Right cardiac atrium (tissue), 5 donors: ENCODE measurements at regions of chr11 and their contacts with region 1.

Region 1: DNA sequence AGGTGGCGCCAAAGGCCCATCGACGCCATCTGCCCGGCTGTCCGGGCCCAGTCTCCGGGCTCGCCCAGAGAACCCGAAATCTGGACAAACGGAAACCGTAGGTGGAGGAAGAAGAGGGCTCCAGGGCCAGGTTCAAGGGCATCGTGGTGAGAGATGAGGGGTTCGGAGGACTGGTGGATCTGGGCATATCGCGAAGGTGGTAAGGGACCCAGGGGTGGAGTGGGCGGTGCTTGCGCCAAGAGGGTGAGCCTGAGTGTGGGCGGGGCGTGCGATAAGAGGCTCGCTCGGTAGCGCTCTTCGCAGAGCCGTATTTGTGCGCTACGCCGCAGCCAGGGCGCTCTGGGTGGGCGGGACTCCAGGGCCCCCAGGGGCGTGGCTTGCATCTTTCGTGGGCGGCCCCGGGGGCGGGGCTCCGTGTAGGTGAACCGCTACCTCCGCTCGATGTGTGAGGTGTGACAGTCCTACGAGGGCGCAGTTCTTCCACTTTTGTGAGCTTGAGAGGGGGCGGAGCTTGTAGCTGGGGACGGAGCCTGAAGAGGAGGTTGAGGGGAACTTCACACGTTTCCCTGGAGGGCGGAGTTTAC is 4.8 kb downstream of the CD248 start:
- DNase-seq: peak; percentile 93 to 97 (median 96)
- ATAC-seq: peak; percentile 83 to 88
- H3K4me3 ChIP-seq: peak overlapping the region; percentile 59
- H3K27ac ChIP-seq: peak overlapping the region; percentile 94
- H3K4me1 ChIP-seq: no peaks in the 10 kb centered on the region
- H3K27me3 ChIP-seq: no peaks in the 10 kb centered on the region

Region 2: GRCh38 chr11:66081505-66081904 is 230.6 kb before region 1 on chr11:
- intact Hi-C with region 1: no loop called
- DNase-seq: peak in 2 of 3 donors; percentile 68 to 75
- ATAC-seq: peak in 1 of 2 donors; percentile 36
- H3K4me3 ChIP-seq: no peak overlapping the region
- H3K27ac ChIP-seq: no peak overlapping the region
- H3K4me1 ChIP-seq: peaks cover 15% of the 10 kb centered on the region
- H3K27me3 ChIP-seq: no peaks in the 10 kb centered on the region

Region 3: GRCh38 chr11:66242095-66242765 is 69.8 kb before region 1 on chr11:
- intact Hi-C with region 1: no loop called
- DNase-seq: peak in 2 of 3 donors; percentile 24 to 59
- ATAC-seq: peak in 1 of 2 donors; percentile 19
- H3K4me3 ChIP-seq: no peak overlapping the region
- H3K27ac ChIP-seq: no peak overlapping the region
- H3K4me1 ChIP-seq: no peaks in the 10 kb centered on the region
- H3K27me3 ChIP-seq: no peaks in the 10 kb centered on the region

Region 4: DNA sequence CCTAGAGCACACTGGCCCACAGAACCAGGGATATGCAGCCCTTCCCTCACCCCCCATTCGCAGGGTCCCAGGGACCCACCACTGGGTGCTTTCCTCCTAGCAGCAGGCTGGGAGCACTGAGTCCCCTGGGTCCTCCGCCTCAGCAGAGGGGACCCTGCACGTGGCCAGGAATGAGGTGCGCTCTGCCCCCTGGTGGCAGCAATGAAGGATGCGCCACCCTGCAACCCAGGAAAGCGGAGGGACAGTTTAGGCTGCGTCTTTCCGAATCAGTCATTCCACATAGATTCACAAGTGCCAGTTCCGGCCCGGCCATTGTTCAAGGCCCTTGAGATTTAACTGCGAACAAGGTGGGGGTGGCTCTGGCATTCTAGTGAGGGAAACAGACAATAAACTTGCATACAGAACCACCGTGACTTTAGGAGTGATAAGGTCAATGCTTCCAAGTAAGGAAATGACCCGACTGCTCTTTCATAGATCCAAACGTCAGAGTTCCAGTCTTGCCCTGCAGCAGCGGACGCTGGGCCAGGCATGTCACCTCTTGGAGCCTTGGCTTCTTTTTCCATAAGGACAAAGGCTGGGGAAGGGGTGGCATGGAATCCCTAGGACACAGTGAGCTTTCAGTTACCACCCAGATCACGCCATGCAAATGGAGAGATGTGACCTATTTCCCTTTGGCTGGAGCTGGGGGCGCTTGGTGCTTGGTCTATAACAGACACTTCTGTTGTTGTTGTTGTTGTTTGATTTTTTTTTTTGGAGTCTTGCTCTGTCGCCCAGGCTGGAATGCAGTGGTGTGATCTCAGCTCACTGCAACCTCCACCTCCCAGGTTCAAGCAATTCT is 16.5 kb after region 1 on chr11:
- intact Hi-C with region 1: loop called in 2 of 4 experiments (anchors 2 kb)
- DNase-seq: peak; percentile 80 to 92 (median 91)
- ATAC-seq: peak; percentile 74 to 78
- H3K4me3 ChIP-seq: no peak overlapping the region
- H3K27ac ChIP-seq: no peak overlapping the region
- H3K4me1 ChIP-seq: no peaks in the 10 kb centered on the region
- H3K27me3 ChIP-seq: no peaks in the 10 kb centered on the region

Region 5: DNA sequence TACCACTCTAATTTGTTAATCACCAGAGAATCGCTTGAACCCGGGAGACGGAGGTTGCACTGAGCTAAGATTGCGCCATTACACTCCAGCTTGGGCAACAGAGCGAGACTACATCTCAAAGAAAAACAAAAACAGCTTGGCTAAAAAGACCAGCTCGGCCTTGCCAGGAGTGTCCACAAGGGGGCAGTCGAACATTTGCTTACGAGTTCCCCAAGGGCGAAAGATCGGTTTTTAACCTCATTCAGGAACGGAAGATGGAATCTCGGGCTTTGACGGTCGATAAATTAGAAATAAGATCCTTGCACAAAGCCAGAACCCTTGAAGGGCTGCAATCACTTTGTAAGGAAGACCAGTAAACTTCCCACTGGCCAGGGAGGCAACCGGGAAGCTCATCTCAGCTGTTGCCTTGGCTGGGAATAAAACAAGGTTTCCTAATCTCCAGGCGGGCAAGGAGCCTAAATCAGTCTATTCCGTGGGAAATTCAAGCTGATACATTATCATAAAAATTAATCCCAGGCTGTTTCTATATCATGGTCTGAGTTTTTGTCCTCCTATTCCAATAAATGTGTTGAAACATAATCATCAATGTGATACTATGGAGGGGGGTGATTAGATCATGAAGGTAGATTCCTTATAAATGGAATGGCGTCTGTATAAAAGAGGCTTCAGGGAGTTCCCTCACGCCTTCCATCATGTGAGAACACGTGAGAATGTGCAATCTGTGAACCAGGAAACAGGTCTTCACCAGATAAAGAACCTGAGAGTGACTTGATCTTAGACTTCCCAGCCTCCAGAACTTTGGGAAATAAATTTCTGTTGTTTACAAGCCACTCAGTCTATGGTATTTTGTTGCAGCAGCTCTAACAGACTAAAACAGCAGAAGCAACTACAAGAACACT is 74.4 kb after region 1 on chr11:
- intact Hi-C with region 1: loop called in 3 of 4 experiments (anchors 5 to 10 kb)
- DNase-seq: peak; percentile 86 to 94 (median 91)
- ATAC-seq: peak; percentile 68 to 72
- H3K4me3 ChIP-seq: no peak overlapping the region
- H3K27ac ChIP-seq: no peak overlapping the region
- H3K4me1 ChIP-seq: no peaks in the 10 kb centered on the region
- H3K27me3 ChIP-seq: no peaks in the 10 kb centered on the region